ENCODE measurements at regions of chr20 and their contacts with region 1.

Region 1: DNA sequence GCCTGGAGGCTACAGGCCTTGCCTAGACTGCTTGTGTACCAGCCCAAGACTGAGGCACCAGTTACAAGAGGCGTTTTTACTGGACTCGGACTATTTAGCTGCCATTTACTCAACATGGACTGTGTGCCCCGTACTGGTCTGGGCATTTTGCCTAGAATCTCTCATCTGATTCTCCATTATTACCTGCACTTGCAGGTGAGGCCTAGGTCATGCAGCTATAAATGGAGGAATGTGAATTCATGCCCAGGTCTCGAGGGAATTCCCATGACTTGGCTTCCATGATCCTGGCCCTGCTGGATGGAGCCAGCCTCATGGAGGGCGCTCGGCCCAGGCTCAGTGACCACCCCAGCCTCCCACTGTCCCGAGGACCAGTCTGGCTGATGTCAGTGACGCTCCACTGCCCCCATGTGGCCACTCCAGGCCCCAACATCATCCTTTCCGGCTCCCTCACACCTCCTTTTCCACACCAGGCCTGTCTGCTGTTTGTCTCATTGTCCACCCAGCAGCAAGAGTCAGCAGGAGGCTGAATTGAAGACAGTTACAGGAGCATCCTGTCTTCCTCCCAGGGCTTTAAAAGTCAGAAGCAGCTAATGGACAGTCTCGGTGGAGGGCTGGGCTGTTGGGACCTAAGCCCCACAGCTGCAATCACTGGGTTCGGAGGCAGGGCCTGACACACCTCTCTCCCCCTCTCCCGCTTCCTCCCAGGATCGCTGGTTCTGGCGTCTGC is 8.7 kb downstream of the MMP24OS start:
- DNase-seq: peak in 1 of 2 experiments; percentile 93
- H3K4me3 ChIP-seq: no peak overlapping the region
- H3K27ac ChIP-seq: no peak overlapping the region
- H3K4me1 ChIP-seq: peaks cover 0 to 9% (median 3%) of the 10 kb centered on the region in 4 experiments; a peak in 6 of 7 replicates
- H3K27me3 ChIP-seq: no peaks in the 10 kb centered on the region
- CTCF ChIP-seq: peak; percentile 87 to 99 (median 96)
- EP300 ChIP-seq: no peak
- POLR2A ChIP-seq: no peak
- RAD21 ChIP-seq: peak; percentile 97

Region 2: DNA sequence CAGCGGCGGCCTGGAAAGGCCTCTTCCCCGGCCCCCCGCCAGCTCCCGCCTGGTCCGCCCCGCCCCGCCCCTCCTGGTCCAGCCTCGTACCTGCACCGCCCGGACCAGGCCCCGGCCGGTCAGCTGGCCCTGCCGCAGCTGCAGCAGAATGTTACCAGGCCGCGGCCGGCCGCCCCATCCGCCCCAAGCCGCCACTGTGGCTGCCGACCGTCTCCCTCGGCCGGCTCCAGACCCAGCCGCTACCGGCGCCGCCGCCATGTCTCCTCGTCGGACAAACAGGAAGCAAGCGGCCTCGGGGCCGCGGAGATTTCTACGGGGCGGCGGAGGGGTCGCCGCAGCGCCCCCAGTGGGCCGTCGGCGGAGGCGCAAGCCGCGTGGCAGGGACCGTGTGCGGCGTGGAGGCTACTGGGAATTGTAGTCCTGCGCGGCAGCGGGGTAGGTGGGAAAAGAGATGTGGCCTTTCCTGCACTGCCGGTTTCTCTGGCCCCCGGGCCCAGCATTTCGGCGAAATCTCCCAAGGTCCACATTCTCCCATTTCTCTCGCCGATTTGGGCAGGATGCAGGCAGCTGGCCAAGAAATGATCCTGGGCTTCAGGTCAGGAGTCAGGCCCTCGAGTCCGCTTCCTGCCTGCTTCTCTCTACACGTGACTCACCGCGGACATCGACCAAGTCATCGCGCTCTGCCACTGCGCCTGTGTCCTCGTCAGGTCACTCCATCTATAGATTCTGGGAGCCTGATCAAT is 176.5 kb before region 1 on chr20 and contains the start of gene TRPC4AP:
- CTCF ChIA-PET with region 1: interaction called, 26 read pairs
- POLR2A ChIA-PET with region 1: no interaction called
- DNase-seq: peak; percentile 75 to 92
- H3K4me3 ChIP-seq: peak within 1 kb of the TSS; percentile 82 to 96 (median 90)
- H3K27ac ChIP-seq: peak within 1 kb of the TSS; percentile 72; the same call in 1 of the 2 replicates
- H3K4me1 ChIP-seq: peaks cover 0 to 10% (median 4%) of the 10 kb centered on the region in 4 experiments; a peak in 5 of 7 replicates
- H3K27me3 ChIP-seq: no peaks in the 10 kb centered on the region
- CTCF ChIP-seq: peak; percentile 88 to 94 (median 89)
- EP300 ChIP-seq: no peak
- POLR2A ChIP-seq: peak in 1 of 2 experiments; percentile 93; a peak in 2 of 3 replicates
- RAD21 ChIP-seq: peak; percentile 23 to 56; a peak in 3 of 4 replicates
- total RNA-seq, gene TRPC4AP: 72.7 and 73.1 TPM in 2 replicates

Region 3: DNA sequence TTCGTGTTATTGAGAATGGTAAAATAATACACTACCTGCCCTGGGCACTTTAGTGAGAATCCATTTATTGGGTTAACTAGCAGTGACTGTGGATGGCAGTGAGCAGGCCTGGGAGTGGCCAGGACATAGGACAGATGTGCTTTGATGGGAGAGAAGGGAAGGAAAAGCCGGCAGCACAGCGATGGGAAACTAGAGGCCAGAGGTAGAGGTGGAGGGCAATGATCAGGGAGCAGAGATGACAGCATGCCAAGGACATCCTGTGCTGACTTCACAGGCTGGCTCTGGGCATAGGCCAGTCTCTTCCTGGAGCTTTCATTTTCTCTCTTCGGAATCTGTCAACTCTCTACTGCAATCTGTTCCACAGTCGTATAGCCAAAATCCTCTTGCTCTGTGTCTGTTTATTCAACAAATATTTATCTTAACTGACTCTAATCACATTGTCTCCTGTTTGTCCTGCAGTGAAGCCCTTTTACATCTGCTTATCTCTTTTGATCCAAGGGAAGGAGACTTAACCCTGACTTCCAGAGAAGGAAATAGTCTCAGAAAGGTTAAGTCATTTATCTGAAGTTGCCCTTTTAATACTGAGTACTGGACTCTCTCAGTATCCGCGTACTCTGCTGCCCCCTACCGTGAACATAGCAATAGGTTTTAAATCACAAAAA is 61.1 kb before region 1 on chr20:
- CTCF ChIA-PET with region 1: interaction called, 37 read pairs
- POLR2A ChIA-PET with region 1: no interaction called
- DNase-seq: peak in 1 of 2 experiments; percentile 81
- H3K4me3 ChIP-seq: no peak overlapping the region
- H3K27ac ChIP-seq: no peak overlapping the region
- H3K4me1 ChIP-seq: no peaks in the 10 kb centered on the region
- H3K27me3 ChIP-seq: no peaks in the 10 kb centered on the region
- CTCF ChIP-seq: peak in 2 of 3 experiments; percentile 80 to 82; a peak in 3 of 4 replicates
- EP300 ChIP-seq: no peak
- POLR2A ChIP-seq: no peak
- RAD21 ChIP-seq: peak; percentile 94 to 96

Region 4: GRCh38 chr20:35240083-35240812 is 29.0 kb before region 1 on chr20:
- CTCF ChIA-PET with region 1: interaction called, 5 read pairs
- POLR2A ChIA-PET with region 1: interaction called, 17 read pairs
- DNase-seq: no peak
- H3K4me3 ChIP-seq: no peak overlapping the region
- H3K27ac ChIP-seq: no peak overlapping the region
- H3K4me1 ChIP-seq: peaks cover 2 to 8% (median 3%) of the 10 kb centered on the region in 4 experiments; a peak in 5 of 7 replicates
- H3K27me3 ChIP-seq: no peaks in the 10 kb centered on the region
- CTCF ChIP-seq: no peak
- EP300 ChIP-seq: no peak
- POLR2A ChIP-seq: no peak
- RAD21 ChIP-seq: no peak

Region 5: DNA sequence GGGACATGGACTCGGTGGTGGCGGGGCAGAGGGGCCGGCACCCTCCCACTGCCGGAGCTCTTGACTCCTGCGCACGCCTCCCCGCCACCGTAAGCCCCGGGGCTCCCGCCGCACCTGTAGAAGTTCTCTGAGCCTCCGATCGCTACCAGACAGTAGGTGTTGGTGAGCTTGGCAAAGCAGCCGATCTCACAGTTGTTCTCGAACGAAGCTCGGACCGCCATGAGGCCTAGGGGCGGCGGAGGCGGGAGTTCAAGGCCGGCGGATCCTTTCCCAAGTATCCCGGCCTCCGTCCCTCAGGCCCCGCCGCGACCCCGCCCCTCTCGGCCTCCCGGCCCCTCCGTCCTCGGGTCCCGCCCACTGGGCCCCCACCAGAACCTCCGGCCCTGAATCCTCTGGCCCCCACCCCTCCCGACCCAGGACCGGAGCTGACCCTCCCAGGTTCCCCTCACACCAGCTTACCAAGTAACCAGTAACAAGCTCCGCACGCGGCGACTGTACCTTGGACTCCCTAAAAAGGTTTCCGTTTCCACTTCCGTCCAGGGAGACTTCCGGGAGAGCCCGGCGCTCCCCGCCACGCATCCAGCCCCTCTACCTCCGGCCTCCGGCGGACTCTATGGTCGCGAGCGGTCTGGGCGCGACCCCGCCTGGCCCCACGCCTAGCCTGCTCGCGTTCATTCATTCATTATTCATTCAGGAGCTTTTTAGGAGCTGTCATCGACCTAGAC is 15.2 kb after region 1 on chr20 and contains the start of gene EIF6:
- CTCF ChIA-PET with region 1: interaction called, 5 read pairs
- POLR2A ChIA-PET with region 1: interaction called, 15 read pairs
- DNase-seq: peak; percentile 65 to 93
- H3K4me3 ChIP-seq: peak within 1 kb of the TSS; percentile 75 to 95 (median 92)
- H3K27ac ChIP-seq: peak within 1 kb of the TSS; percentile 13; the same call in 1 of the 2 replicates
- H3K4me1 ChIP-seq: peaks cover 3 to 8% (median 5%) of the 10 kb centered on the region in 4 experiments; a peak in 6 of 7 replicates
- H3K27me3 ChIP-seq: no peaks in the 10 kb centered on the region
- CTCF ChIP-seq: no peak
- EP300 ChIP-seq: no peak
- POLR2A ChIP-seq: no peak; a peak in 1 of 3 replicates
- RAD21 ChIP-seq: no peak
- total RNA-seq, gene EIF6: 183 and 184 TPM in 2 replicates

Region 6: GRCh38 chr20:35327074-35327976 is 58.1 kb after region 1 on chr20:
- CTCF ChIA-PET with region 1: no interaction called
- POLR2A ChIA-PET with region 1: no interaction called
- DNase-seq: no peak
- H3K4me3 ChIP-seq: no peak overlapping the region
- H3K27ac ChIP-seq: no peak overlapping the region
- H3K4me1 ChIP-seq: peaks cover 0 to 4% (median 1%) of the 10 kb centered on the region in 4 experiments; a peak in 2 of 7 replicates
- H3K27me3 ChIP-seq: no peaks in the 10 kb centered on the region
- CTCF ChIP-seq: no peak
- EP300 ChIP-seq: no peak
- POLR2A ChIP-seq: no peak
- RAD21 ChIP-seq: no peak

Measured in H1 (cell line).